K562 (cell line): ENCODE measurements at regions of chr2 and their contacts with region 1.

Region 1: DNA sequence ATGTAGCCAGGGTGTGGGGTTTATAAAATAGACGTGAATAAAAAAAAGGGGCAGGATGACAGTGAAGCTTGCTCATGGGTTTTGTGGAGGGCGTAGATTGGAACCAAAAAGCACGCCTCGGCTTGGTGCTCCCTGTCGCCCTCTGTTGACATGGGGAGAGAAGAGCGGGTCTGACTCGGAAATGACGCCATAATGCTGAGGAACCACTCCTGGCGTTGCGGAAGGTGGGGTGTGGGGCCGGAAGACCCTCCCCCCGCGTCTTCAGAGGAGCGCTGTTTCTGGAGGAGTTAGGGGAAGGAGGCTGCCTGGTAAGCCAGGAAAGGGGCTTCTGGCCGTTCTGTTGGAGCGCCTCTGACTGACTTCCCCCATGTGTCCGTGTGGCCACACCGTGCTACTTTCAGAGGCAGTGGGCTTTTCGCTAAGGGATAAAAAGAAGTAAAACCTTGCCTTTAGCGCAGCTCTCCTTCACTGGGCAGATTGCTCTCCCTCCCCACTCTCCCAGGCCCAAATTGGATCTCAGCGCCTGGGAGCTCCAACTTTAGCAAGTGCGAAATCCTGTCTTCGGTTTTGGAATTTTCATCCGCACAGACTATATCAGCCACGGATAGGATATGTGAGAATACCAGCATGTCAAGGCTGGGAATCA is 42.8 kb downstream of the PLEKHA3 start:
- DNase-seq: peak; percentile 92 to 97 (median 95)
- ATAC-seq: peak; percentile 99
- H3K4me3 ChIP-seq: peak overlapping the region; percentile 54
- H3K27ac ChIP-seq: peak overlapping the region; percentile 76
- H3K4me1 ChIP-seq: peaks cover 0 to 2% of the 10 kb centered on the region in 2 experiments; a peak in 1 of 5 replicates
- H3K27me3 ChIP-seq: no peaks in the 10 kb centered on the region
- CTCF ChIP-seq: peak; percentile 88 to 99 (median 97)
- EP300 ChIP-seq: peak; percentile 57
- POLR2A ChIP-seq: peak; percentile 95
- RAD21 ChIP-seq: peak; percentile 54 to 63

Region 2: DNA sequence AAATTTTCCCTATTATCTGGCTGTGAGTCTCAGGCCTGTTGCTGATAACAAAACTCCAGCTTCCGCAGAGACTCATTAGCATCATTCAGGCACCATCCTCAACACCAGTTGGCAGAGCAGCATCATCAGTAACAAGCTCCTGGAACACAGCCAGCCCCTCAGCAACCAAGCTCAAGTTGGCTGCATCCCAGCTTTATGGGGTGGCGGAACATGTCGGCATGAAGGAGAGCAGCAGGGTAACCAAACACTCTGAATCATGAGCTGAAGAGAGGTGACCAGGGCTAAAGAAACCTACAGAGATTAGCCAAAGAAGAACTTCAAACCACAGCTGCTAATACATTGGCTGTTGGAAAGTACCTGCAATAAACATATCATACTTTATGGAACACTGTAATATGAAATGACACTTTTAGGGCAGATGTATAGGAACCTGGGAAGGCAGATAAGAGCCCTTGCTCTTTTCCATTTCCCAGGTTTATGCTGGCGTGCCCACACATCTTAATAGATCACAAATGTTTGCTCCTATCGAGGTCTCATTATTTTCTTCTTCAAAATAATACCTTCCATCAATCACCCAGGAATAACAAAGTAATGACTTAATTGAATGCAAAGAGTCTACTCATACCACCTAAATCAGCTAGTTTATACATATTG is 514.3 kb before region 1 on chr2:
- CTCF ChIA-PET with region 1: no interaction called
- POLR2A ChIA-PET with region 1: no interaction called
- in situ Hi-C with region 1: no loop called
- intact Hi-C with region 1: no loop called
- DNase-seq: peak in 1 of 4 experiments; percentile 11
- ATAC-seq: no peak
- H3K4me3 ChIP-seq: no peak overlapping the region
- H3K27ac ChIP-seq: no peak overlapping the region
- H3K4me1 ChIP-seq: no peaks in the 10 kb centered on the region
- H3K27me3 ChIP-seq: peaks cover 0 to 3% of the 10 kb centered on the region in 2 experiments; a peak in 2 of 5 replicates
- CTCF ChIP-seq: no peak
- EP300 ChIP-seq: no peak
- POLR2A ChIP-seq: no peak
- RAD21 ChIP-seq: no peak

Region 3: DNA sequence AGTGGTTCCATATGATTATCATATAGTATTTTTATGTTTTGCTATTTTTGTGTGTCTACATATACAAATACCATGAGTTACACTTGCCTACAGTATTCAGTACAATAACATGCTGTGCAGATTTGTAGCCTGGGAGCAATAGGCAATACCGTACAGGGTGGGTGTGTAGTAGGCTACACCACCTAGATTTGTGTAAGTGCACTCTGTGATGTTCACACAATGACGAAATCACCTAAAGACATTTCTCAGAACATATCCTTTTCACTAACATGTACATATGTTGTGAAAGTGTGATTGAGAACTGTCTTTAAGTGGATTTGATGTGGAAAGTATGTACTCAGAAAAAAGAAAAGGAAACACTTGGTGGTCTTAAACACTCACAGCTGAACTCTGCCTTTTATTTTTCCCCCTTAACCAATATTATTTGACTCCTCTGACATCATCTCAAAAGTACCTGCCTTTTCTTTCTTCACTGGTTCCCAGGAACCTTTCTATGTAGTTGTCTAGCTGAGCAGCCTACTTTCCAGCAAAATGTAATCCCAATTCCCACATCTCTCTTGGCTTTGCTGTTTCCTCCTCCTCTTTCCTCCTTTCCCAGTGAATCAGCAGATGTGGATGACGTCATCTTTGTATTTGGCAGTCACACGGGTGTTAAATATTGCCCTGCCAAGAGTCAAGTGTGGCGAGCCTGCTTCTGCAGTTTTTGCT is 281.1 kb before region 1 on chr2:
- CTCF ChIA-PET with region 1: no interaction called
- POLR2A ChIA-PET with region 1: no interaction called
- in situ Hi-C with region 1: no loop called
- intact Hi-C with region 1: no loop called
- DNase-seq: peak in 3 of 4 experiments; percentile 25 to 53 (median 33)
- ATAC-seq: peak; percentile 55
- H3K4me3 ChIP-seq: no peak overlapping the region
- H3K27ac ChIP-seq: no peak overlapping the region; the same call in 2 of the 3 replicates
- H3K4me1 ChIP-seq: peaks cover 0 to 15% of the 10 kb centered on the region in 2 experiments; a peak in 2 of 5 replicates
- H3K27me3 ChIP-seq: no peaks in the 10 kb centered on the region
- CTCF ChIP-seq: no peak
- EP300 ChIP-seq: no peak
- POLR2A ChIP-seq: no peak
- RAD21 ChIP-seq: no peak

Region 4: DNA sequence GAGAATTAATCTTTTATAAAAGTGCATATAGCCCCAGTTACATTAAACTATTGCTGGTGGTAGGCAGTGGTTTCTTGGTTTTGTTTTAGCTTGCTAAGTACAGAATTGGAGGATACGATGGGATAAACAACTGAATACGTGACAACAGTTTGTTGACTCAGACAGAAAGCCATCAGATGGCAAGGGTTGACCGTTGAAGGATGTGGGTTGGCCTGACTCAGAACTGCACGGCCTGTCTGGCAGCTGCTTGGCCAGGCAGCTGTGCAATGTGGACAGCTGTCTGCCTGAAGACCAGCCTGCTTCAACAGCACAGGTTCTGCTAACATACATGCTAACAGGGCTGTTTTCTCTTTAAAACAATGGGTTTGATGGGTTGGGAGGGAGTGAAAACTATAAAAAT is 118.7 kb before region 1 on chr2:
- CTCF ChIA-PET with region 1: no interaction called
- POLR2A ChIA-PET with region 1: no interaction called
- in situ Hi-C with region 1: no loop called
- intact Hi-C with region 1: loop called (anchors 5 kb)
- DNase-seq: peak in 2 of 4 experiments; percentile 23 to 62
- ATAC-seq: peak; percentile 48
- H3K4me3 ChIP-seq: no peak overlapping the region
- H3K27ac ChIP-seq: no peak overlapping the region
- H3K4me1 ChIP-seq: peaks cover 3 to 30% of the 10 kb centered on the region in 2 experiments; a peak in 4 of 5 replicates
- H3K27me3 ChIP-seq: no peaks in the 10 kb centered on the region
- CTCF ChIP-seq: no peak
- EP300 ChIP-seq: peak; percentile 46; the same call in 1 of the 2 replicates
- POLR2A ChIP-seq: no peak
- RAD21 ChIP-seq: no peak

Region 5: GRCh38 chr2:178536037-178536436 is 13.0 kb after region 1 on chr2:
- CTCF ChIA-PET with region 1: no interaction called
- POLR2A ChIA-PET with region 1: interaction called, 14 read pairs
- in situ Hi-C with region 1: no loop called
- intact Hi-C with region 1: no loop called
- DNase-seq: no peak
- ATAC-seq: no peak
- H3K4me3 ChIP-seq: no peak overlapping the region
- H3K27ac ChIP-seq: no peak overlapping the region
- H3K4me1 ChIP-seq: no peaks in the 10 kb centered on the region
- H3K27me3 ChIP-seq: no peaks in the 10 kb centered on the region
- CTCF ChIP-seq: no peak
- EP300 ChIP-seq: no peak
- POLR2A ChIP-seq: no peak
- RAD21 ChIP-seq: no peak

Region 6: DNA sequence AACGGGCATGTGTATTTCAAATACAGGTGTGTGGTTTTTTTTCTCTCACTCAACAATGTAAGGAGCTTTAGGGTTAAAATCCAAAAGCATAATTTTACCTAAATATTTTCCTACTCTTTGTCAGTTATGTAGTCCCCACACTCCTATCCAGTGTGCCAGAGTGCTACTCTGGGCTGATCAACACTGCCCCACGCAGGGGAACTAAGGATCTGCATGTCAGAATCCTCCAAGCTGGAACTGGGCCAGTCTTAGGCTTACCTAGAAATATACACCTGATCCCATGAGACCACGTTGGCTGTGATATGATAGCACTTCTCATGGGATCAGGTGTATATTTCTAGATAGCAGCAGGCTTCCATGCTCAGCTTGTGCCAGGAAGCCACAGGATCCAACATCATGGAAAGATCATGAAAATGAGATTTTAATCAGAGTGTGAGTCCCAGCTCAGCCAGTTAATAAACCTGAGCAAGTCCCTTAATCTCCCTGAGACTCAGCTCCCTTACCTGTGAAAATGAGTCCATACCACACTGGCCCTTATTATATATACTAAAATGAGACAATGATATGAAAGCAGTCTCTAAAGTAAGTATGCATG is 497.2 kb after region 1 on chr2:
- CTCF ChIA-PET with region 1: no interaction called
- POLR2A ChIA-PET with region 1: no interaction called
- in situ Hi-C with region 1: no loop called
- intact Hi-C with region 1: no loop called
- DNase-seq: peak in 3 of 4 experiments; percentile 22 to 28 (median 27)
- ATAC-seq: peak; percentile 83
- H3K4me3 ChIP-seq: no peak overlapping the region
- H3K27ac ChIP-seq: no peak overlapping the region
- H3K4me1 ChIP-seq: no peaks in the 10 kb centered on the region
- H3K27me3 ChIP-seq: no peaks in the 10 kb centered on the region
- CTCF ChIP-seq: peak in 2 of 3 experiments; percentile 30 to 39; a peak in 3 of 6 replicates
- EP300 ChIP-seq: no peak
- POLR2A ChIP-seq: no peak
- RAD21 ChIP-seq: peak in 1 of 2 experiments; percentile 35; a peak in 1 of 4 replicates